Activated T-helper 1 cell treated with anti-CD3 and anti-CD28 coated beads, Interleukin-12 subunit alpha, Interleukin-12 subunit beta, Interleukin-2, Interleukin-4 antibody, amounts not matched to agents 30 ng/mL and 10 ng/mL and 1 ng/mL, durations not matched to agents 14 hours and 24 hours and 36 hours (primary cell): ENCODE measurements at regions of chr17 and their contacts with region 1.

Region 1: DNA sequence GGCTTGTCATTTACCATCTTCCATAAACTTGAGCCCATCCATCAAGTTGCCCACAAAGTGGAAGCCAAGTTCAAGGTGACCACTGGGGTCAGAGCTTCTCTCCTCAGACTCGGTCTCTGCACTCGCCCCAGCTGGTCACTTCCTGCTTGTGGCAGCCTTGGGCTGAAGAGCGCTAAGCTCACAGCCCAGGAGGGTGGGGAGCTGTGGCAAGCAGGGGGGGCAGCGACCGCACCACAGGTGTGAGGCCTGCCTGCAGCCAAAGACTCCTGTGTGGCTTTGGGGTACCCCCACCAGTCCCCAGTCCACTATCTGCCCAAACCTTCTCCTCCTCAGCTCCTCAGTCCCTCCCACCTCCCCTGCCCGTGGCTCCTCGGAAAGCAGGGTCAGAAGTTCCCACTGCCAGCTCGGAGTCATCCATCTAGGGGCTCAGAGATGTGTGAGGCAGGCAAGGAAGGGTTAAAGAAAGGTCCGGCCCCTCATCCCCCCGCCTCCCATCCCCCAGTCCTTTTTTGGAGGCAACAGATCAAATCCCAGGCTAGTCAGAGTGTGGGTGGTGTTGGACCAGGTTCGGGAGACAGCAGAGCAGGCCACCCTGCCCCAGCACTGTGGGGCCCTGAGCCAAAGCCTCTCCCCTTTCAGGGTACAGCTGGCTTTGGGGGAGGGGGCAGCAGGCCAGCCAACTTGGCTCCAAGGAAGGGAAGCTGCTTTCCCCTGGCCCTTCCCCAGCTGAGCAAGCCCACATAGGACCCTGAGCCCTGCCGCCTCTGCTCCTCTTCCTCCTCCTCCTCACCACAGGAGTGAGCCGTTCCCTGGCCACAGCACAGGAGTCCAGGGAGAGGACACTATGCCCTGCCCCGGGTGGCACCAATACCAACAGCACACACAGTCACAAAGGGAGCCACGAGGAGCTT is 3.2 kb downstream of the CSF3 start:
- DNase-seq: no peak
- H3K4me3 Mint-ChIP-seq: no peak overlapping the region
- H3K27ac Mint-ChIP-seq: no peak overlapping the region
- H3K4me1 Mint-ChIP-seq: peaks cover 6% of the 10 kb centered on the region
- H3K27me3 Mint-ChIP-seq: no peaks in the 10 kb centered on the region

Region 2: DNA sequence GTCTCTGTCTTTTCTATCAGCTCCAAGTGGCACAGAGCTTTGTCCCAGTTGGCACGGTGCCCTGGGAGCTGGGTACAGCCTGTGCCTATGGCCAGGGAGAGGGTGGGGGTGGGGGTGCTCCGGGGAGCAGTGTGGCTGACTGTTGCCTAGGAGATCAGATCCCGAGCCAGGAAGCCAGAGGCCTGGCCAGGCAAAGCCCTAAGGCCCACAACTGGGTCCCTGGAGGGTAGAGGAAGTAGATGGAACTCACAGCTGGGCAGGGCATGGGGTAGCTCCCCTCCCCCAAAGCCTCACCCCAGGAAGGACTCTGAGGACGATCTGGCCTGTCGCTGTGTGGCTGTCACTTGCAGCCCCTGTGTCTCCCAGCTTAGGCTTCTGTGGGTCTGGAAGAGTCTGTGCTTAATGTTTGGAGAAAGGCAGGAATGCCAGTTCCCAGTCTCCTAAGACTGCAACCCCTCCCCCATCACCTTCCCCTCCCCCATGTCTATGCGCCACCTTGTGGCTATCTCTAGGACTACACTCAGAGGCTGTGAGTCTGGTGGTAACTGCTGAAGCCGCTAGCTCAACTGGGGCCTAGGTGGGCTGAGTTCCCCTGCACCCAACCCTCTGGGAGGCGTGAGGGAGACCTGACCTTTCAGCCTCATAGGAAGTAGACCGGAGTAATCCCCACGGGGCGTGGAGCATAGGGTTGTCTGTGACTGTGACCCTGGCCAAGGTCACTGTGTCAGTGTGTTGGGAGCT is 56.9 kb after region 1 on chr17:
- intact Hi-C with region 1: loop called (anchors 1 kb)
- DNase-seq: peak; percentile 50
- H3K4me3 Mint-ChIP-seq: no peak overlapping the region
- H3K27ac Mint-ChIP-seq: no peak overlapping the region
- H3K4me1 Mint-ChIP-seq: peaks cover 11% of the 10 kb centered on the region
- H3K27me3 Mint-ChIP-seq: peaks cover 3% of the 10 kb centered on the region

Region 3: GRCh38 chr17:40086150-40087044 is 67.9 kb after region 1 on chr17:
- intact Hi-C with region 1: loop called (anchors 1 kb)
- DNase-seq: no peak
- H3K4me3 Mint-ChIP-seq: no peak overlapping the region
- H3K27ac Mint-ChIP-seq: no peak overlapping the region
- H3K4me1 Mint-ChIP-seq: no peaks in the 10 kb centered on the region
- H3K27me3 Mint-ChIP-seq: no peaks in the 10 kb centered on the region

Region 4: DNA sequence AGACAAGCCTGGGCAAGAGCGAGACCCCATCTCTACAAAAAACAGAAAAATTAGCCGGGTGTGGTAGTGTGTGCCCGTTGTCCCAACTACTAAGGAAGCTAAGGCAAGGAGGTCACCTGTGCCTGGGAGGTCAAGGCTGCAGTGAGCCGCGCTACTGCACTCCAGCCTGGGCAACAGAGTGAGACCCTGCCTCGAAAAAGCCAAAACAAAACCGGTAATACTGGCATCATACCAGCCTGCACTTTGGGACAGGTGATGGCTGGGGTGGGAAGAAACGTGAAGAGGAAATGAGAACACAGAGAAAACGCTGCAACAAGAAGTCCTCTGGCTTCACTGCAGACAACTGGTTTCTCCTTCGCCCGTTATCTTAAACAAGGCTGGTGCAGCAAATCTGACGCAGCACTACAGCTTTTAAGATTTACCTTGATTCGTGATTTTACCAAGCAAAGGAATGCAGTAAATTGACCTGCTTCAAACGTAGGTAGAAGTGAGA is 121.1 kb after region 1 on chr17:
- intact Hi-C with region 1: no loop called
- DNase-seq: no peak
- H3K4me3 Mint-ChIP-seq: peak overlapping the region; percentile 98
- H3K27ac Mint-ChIP-seq: peak overlapping the region; percentile 98
- H3K4me1 Mint-ChIP-seq: peaks cover 34% of the 10 kb centered on the region
- H3K27me3 Mint-ChIP-seq: peaks cover 2% of the 10 kb centered on the region

Region 5: GRCh38 chr17:40168262-40168832 is 149.9 kb after region 1 on chr17:
- intact Hi-C with region 1: loop called (anchors 1 kb)
- DNase-seq: no peak
- H3K4me3 Mint-ChIP-seq: no peak overlapping the region
- H3K27ac Mint-ChIP-seq: peak overlapping the region; percentile 7
- H3K4me1 Mint-ChIP-seq: peaks cover 10% of the 10 kb centered on the region
- H3K27me3 Mint-ChIP-seq: no peaks in the 10 kb centered on the region

Region 6: DNA sequence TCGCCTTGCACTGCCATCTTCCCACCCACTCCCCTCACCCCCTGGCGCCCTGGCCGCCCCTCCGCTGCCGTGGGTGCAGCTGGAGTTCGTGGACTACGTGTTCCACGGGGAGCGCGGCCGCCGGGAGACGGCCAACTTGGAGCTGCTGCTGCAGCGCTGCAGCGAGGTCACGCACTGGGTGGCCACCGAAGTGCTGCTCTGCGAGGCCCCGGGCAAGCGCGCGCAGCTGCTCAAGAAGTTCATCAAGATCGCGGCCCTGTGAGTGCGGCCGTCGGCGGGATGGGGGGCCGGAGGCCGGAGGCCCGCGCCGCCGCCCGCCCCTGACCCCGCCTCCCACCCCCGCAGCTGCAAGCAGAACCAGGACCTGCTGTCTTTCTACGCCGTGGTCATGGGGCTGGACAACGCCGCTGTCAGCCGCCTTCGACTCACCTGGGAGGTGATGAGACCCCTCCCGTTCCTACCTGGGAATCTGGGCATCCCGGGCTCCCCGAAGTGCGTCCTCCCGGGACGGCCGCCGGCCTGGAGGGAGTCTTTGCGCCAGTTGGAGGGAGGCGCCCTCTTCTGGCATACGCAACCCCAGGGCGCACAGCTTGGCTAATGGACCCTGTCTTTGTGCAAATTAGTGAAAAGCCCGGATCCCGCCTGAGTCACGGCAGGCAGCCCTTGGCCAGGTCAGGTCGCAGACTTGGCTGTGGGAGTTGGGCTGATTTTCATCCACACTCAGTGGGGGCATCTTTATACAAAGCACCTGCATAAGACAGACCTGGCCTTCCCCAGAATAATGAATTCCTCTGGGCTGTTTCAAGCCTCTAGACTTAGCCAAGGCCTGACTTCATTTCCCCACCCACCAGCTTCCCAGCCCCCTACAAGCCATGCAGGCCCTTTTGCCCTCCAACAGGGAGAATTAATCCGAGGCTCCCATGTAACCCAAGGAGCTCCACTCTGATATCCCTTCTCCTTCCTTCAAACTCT is 173.1 kb after region 1 on chr17:
- intact Hi-C with region 1: loop called (anchors 1 kb)
- DNase-seq: peak; percentile 53
- H3K4me3 Mint-ChIP-seq: peak overlapping the region; percentile 92
- H3K27ac Mint-ChIP-seq: peak overlapping the region; percentile 79
- H3K4me1 Mint-ChIP-seq: peaks cover 16% of the 10 kb centered on the region
- H3K27me3 Mint-ChIP-seq: peaks cover 2% of the 10 kb centered on the region

Region 7: GRCh38 chr17:40287494-40288369 is 269.3 kb after region 1 on chr17 and contains the start of gene CDC6:
- intact Hi-C with region 1: loop called (anchors 5 kb)
- DNase-seq: peak; percentile 98
- H3K4me3 Mint-ChIP-seq: peak within 1 kb of the TSS; percentile 99
- H3K27ac Mint-ChIP-seq: peak within 1 kb of the TSS; percentile 98
- H3K4me1 Mint-ChIP-seq: peaks cover 39% of the 10 kb centered on the region
- H3K27me3 Mint-ChIP-seq: no peaks in the 10 kb centered on the region
- total RNA-seq, gene CDC6: 130 and 135 TPM in 2 replicates